WTC11 (cell line): ENCODE measurements at regions of chr10 and their contacts with region 1.

Region 1: DNA sequence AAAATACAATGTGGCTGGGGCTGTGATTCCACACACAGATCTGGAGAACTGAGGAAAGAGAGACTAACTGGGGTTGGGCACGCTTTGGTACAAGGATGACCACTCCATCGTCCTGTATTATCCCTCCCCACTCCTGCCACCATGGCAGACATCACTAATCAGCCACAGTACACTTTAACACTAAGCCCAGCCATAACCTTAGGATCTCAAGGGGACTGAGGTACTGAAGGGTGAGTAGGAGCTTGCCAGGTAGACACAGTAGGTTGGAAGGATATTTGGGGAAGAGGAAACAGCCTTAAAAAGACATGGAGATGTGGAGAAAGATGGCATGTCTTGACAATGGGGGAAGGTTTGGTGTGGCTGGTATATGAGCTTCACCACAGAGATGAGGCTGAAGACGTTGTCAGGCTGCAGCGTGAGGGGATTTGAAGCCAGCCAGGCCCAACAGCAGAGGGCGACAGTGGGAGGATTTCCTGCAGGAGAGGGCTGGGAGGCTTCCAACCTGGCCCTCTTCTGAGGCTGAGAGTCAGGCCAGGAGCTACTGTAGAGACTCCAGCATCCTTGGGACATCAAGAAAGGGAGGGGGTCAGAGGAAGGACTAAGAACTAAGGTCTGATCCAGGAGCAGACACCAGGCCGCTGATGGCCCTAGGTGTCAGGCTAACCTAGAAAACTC is 58.6 kb upstream of the COL13A1 start:
- DNase-seq: peak; percentile 79
- ATAC-seq: peak; percentile 92
- H3K4me3 Mint-ChIP-seq: no peak overlapping the region
- H3K27ac Mint-ChIP-seq: no peak overlapping the region
- H3K4me1 Mint-ChIP-seq: 0 out of 2 replicates have a peak, but pooled peaks cover 6% of the 10 kb centered on the region
- H3K27me3 Mint-ChIP-seq: peaks cover 4% of the 10 kb centered on the region
- CTCF ChIP-seq: 0 out of 2 replicates have a peak, but pooled peaks have one; percentile 28

Region 2: DNA sequence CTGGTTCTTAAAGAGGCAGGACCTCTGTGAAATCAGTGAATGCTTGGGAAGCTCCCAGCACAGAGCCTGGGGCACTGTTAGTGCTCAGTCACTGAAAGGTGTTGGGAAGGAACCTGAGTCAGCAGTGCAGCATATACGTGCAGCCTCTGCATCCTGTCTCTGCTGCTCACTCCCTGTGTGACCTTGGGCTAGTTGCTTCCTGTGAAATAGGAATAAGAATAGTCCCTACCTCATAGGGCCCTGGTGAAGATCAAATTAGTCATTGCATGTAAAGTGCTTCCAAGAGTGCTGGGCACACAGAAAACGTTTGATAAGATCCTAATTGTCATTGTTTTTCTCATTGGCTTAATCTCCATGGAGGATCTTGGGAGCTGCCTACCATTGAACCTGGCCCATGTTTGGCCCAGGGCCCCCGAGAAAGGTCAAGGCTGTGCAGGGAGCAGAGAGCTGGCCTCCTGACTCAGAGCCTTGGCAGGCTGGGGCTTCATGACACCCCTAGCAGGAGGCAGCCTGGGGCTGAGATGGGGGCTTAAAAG is 14.7 kb before region 1 on chr10:
- CTCF ChIA-PET with region 1: interaction called, 19 read pairs
- POLR2A ChIA-PET with region 1: no interaction called
- DNase-seq: no peak
- ATAC-seq: peak; percentile 74
- H3K4me3 Mint-ChIP-seq: no peak overlapping the region
- H3K27ac Mint-ChIP-seq: peak overlapping the region; percentile 38; the same call in 1 of the 2 replicates
- H3K4me1 Mint-ChIP-seq: peaks cover 26% of the 10 kb centered on the region
- H3K27me3 Mint-ChIP-seq: peaks cover 5% of the 10 kb centered on the region
- CTCF ChIP-seq: no peak

Region 3: GRCh38 chr10:69769395-69769992 is 26.4 kb after region 1 on chr10:
- CTCF ChIA-PET with region 1: interaction called, 18 read pairs
- POLR2A ChIA-PET with region 1: no interaction called
- DNase-seq: peak; percentile 64
- ATAC-seq: peak; percentile 86
- H3K4me3 Mint-ChIP-seq: no peak overlapping the region
- H3K27ac Mint-ChIP-seq: no peak overlapping the region
- H3K4me1 Mint-ChIP-seq: peaks cover 12% of the 10 kb centered on the region
- H3K27me3 Mint-ChIP-seq: peaks cover 9% of the 10 kb centered on the region
- CTCF ChIP-seq: no peak

Region 4: GRCh38 chr10:69800109-69800508 is 57.0 kb after region 1 on chr10:
- CTCF ChIA-PET with region 1: interaction called, 29 read pairs
- POLR2A ChIA-PET with region 1: no interaction called
- DNase-seq: peak; percentile 72
- ATAC-seq: peak; percentile 58
- H3K4me3 Mint-ChIP-seq: no peak overlapping the region; the same call in 1 of the 2 replicates
- H3K27ac Mint-ChIP-seq: no peak overlapping the region
- H3K4me1 Mint-ChIP-seq: peaks cover 37% of the 10 kb centered on the region
- H3K27me3 Mint-ChIP-seq: peaks cover 74% of the 10 kb centered on the region
- CTCF ChIP-seq: peak; percentile 48; the same call in 1 of the 2 replicates

Region 5: GRCh38 chr10:69885379-69886013 is 142.4 kb after region 1 on chr10:
- CTCF ChIA-PET with region 1: interaction called, 10 read pairs
- POLR2A ChIA-PET with region 1: no interaction called
- DNase-seq: no peak
- ATAC-seq: peak; percentile 48
- H3K4me3 Mint-ChIP-seq: no peak overlapping the region
- H3K27ac Mint-ChIP-seq: no peak overlapping the region
- H3K4me1 Mint-ChIP-seq: peaks cover 16% of the 10 kb centered on the region
- H3K27me3 Mint-ChIP-seq: no peaks in the 10 kb centered on the region; the same call in none of the 2 replicates
- CTCF ChIP-seq: peak; percentile 42; the same call in 1 of the 2 replicates

Region 6: DNA sequence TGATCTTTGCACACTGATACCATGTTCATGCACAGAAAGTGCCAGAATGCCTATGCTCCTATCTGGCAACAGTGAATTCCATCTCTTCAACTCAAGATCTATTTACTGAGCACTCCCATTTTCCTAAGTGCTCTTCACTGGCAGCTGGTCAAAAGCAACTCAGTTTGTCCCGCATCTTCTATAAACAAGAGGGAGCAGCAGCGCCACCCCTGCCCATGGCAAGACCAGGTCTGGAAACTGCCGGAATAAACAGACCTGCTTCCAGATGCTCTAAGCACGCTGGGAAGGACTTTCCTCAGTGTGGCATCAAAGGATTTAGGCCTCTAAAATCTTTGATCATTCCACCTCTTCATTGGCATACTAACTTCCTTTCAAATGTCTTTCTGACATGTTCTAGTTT is 205.2 kb after region 1 on chr10:
- CTCF ChIA-PET with region 1: no interaction called
- POLR2A ChIA-PET with region 1: no interaction called
- DNase-seq: no peak
- ATAC-seq: no peak; the same call in 1 of the 2 replicates
- H3K4me3 Mint-ChIP-seq: no peak overlapping the region
- H3K27ac Mint-ChIP-seq: no peak overlapping the region
- H3K4me1 Mint-ChIP-seq: peaks cover 21% of the 10 kb centered on the region
- H3K27me3 Mint-ChIP-seq: no peaks in the 10 kb centered on the region
- CTCF ChIP-seq: no peak